PC-3 (cell line): ENCODE measurements at regions of chr1 and their contacts with region 1.

Region 1: DNA sequence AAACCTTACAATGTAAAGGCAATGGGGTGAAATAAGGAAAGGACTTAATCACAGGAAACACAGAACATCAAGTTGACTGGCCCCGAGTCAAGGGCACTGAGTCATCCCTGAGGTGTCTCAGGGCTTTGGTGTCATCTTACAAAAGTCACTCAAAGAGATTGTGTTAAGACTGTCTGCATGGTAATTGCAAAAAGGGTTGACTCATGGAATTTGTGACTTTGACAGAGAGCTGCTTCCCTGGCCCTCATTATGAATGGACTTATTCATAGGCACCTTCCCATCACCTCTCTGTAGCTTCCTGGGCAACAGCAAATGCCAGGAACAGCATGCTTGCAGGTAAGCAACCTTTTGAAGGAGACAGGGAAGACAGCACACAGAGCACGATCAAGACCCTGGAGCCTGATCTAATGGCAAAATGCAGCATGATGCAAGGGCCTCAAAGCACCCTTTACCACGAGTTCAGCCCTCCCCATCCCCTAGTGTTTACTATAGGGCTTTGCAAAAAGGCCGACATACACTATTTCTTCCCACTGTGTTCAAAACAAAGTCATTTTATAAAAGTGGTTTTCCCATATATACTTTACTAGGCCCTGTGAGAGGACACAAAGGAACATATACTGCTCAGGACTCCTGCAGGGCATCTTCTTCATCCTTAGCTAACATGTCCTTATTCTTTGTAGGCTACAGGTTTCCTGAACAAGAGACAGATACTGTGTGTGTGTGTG is 17.1 kb downstream of the ZP4 start:
- DNase-seq: peak; percentile 91
- ATAC-seq: peak; percentile 89
- H3K4me3 ChIP-seq: no peak overlapping the region
- H3K27ac ChIP-seq: peak overlapping the region; percentile 84
- H3K4me1 ChIP-seq: peaks cover 35% of the 10 kb centered on the region
- H3K27me3 ChIP-seq: no peaks in the 10 kb centered on the region
- CTCF ChIP-seq: no peak

Region 2: DNA sequence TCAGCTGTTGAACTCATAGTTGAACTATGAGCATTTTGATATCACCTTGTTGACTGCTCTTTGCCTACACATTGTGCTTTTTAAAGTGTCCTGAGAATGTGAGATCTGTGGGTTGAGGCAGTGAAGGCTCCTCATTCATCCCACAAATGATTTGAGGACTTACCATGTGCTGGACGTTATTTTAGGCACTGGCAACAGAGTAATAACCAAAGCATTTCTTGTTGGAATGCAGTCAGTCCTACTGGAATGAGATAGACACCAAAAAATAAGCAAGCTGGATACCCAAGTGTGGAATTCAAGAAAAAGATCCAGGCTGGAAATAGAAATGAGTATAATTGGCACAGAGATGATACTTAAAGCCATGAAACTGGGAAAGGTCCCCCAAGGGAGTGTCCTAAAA is 56.4 kb before region 1 on chr1:
- CTCF ChIA-PET with region 1: no interaction called
- POLR2A ChIA-PET with region 1: no interaction called
- intact Hi-C with region 1: loop called (anchors 2 kb)
- DNase-seq: no peak
- ATAC-seq: no peak
- H3K4me3 ChIP-seq: no peak overlapping the region
- H3K27ac ChIP-seq: no peak overlapping the region
- H3K4me1 ChIP-seq: peaks cover 2% of the 10 kb centered on the region; the same call in 1 of the 2 replicates
- H3K27me3 ChIP-seq: no peaks in the 10 kb centered on the region
- CTCF ChIP-seq: no peak

Region 3: DNA sequence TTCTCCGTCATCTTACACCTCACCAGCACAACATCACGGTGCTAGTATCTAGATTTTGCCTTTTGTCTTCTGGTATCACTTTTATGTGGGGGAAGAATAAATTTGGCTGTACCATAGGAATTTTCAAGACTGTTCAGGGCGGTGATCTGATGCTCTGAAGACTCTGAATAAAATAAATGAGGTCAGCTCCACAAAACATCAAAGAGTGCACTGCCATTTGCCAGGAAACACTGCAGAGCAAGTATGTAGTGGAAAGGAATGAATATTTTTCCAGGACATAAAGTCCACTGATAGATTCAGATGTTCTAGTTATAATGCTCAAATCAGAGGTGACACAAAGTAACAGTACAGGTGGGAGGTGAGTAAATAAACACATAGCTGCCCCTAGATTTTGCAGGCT is 39.2 kb before region 1 on chr1:
- CTCF ChIA-PET with region 1: no interaction called
- POLR2A ChIA-PET with region 1: no interaction called
- intact Hi-C with region 1: no loop called
- DNase-seq: no peak
- ATAC-seq: no peak
- H3K4me3 ChIP-seq: no peak overlapping the region
- H3K27ac ChIP-seq: no peak overlapping the region
- H3K4me1 ChIP-seq: no peaks in the 10 kb centered on the region
- H3K27me3 ChIP-seq: peaks cover 3% of the 10 kb centered on the region; the same call in 1 of the 2 replicates
- CTCF ChIP-seq: no peak

Region 4: GRCh38 chr1:238052496-238053266 is 179.0 kb after region 1 on chr1:
- CTCF ChIA-PET with region 1: no interaction called
- POLR2A ChIA-PET with region 1: no interaction called
- intact Hi-C with region 1: loop called (anchors 2 kb)
- DNase-seq: peak; percentile 56
- ATAC-seq: peak; percentile 82
- H3K4me3 ChIP-seq: no peak overlapping the region
- H3K27ac ChIP-seq: peak overlapping the region; percentile 79
- H3K4me1 ChIP-seq: peaks cover 19% of the 10 kb centered on the region
- H3K27me3 ChIP-seq: no peaks in the 10 kb centered on the region
- CTCF ChIP-seq: no peak

Region 5: GRCh38 chr1:238111516-238111915 is 237.9 kb after region 1 on chr1:
- CTCF ChIA-PET with region 1: no interaction called
- POLR2A ChIA-PET with region 1: no interaction called
- intact Hi-C with region 1: no loop called
- DNase-seq: no peak
- ATAC-seq: no peak
- H3K4me3 ChIP-seq: no peak overlapping the region
- H3K27ac ChIP-seq: no peak overlapping the region
- H3K4me1 ChIP-seq: no peaks in the 10 kb centered on the region
- H3K27me3 ChIP-seq: no peaks in the 10 kb centered on the region
- CTCF ChIP-seq: no peak

Region 6: DNA sequence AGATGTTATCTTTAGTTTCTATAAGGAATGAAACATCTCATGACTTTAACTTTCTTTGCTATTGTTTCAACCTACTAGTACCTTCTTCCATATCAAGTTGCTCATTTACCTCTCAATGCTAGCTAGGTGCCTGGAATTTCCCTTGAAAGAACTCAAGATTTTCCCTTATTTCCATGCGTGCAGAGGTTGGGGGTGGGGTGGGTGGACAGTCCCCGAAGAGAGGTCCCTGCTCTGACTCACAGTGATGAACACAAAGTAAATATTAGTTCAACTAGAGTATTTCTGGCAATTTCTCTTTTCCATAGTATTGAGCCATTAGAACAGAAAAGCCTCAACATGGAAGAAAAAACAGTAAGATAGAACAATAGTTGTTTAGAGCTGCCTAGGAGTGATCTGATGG is 256.0 kb after region 1 on chr1:
- CTCF ChIA-PET with region 1: no interaction called
- POLR2A ChIA-PET with region 1: no interaction called
- intact Hi-C with region 1: loop called (anchors 10 kb)
- DNase-seq: peak; percentile 50
- ATAC-seq: peak; percentile 85
- H3K4me3 ChIP-seq: no peak overlapping the region
- H3K27ac ChIP-seq: peak overlapping the region; percentile 14; the same call in 1 of the 2 replicates
- H3K4me1 ChIP-seq: peaks cover 11% of the 10 kb centered on the region
- H3K27me3 ChIP-seq: no peaks in the 10 kb centered on the region
- CTCF ChIP-seq: no peak